T-cell (primary cell): ENCODE measurements at regions of chr15 and their contacts with region 1.

Region 1: GRCh38 chr15:65434201-65434600 is 11.5 kb upstream of the IGDCC4 start:
- DNase-seq: no peak
- ATAC-seq: no peak
- H3K4me3 ChIP-seq: no peak overlapping the region
- H3K4me3 Mint-ChIP-seq: no peak overlapping the region
- H3K27ac ChIP-seq: no peak overlapping the region
- H3K27ac Mint-ChIP-seq: no peak overlapping the region
- H3K4me1 ChIP-seq: no peaks in the 10 kb centered on the region
- H3K4me1 Mint-ChIP-seq: no peaks in the 10 kb centered on the region
- H3K27me3 ChIP-seq: peaks cover 0 to 6% of the 10 kb centered on the region in 2 experiments
- H3K27me3 Mint-ChIP-seq: peaks cover 0 to 4% of the 10 kb centered on the region in 2 donors

Region 2: DNA sequence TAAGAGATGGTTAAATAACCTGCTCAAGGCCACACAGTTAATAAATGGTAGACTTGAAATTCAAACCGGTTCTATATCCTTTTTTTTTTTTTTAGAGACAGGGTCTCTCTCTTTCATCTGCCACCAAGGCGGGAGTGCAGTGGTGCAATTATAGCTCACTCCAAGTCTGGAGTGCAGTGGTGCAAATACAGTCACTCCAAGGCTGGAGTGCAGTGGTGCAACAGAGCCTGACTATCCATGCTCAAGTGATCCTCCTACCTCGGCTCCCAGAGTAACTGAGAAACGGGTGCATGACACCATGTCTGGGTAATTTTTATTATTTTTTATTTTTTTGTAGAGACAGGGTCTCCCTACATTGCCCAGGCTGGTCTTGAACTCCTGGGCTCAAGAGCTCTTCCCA is 59.9 kb after region 1 on chr15:
- CTCF ChIA-PET with region 1: interaction called in 1 of 2 experiments, 11 read pairs
- POLR2A ChIA-PET with region 1: no interaction called
- DNase-seq: no peak
- ATAC-seq: no peak
- H3K4me3 ChIP-seq: no peak overlapping the region
- H3K4me3 Mint-ChIP-seq: no peak overlapping the region
- H3K27ac ChIP-seq: no peak overlapping the region
- H3K27ac Mint-ChIP-seq: no peak overlapping the region
- H3K4me1 ChIP-seq: peaks cover 0 to under 1% of the 10 kb centered on the region in 2 experiments
- H3K4me1 Mint-ChIP-seq: peaks cover 7 to 11% (median 7%) of the 10 kb centered on the region in 3 donors
- H3K27me3 ChIP-seq: no peaks in the 10 kb centered on the region
- H3K27me3 Mint-ChIP-seq: no peaks in the 10 kb centered on the region